ENCODE measurements at regions of chr10 and their contacts with region 1.

Region 1: DNA sequence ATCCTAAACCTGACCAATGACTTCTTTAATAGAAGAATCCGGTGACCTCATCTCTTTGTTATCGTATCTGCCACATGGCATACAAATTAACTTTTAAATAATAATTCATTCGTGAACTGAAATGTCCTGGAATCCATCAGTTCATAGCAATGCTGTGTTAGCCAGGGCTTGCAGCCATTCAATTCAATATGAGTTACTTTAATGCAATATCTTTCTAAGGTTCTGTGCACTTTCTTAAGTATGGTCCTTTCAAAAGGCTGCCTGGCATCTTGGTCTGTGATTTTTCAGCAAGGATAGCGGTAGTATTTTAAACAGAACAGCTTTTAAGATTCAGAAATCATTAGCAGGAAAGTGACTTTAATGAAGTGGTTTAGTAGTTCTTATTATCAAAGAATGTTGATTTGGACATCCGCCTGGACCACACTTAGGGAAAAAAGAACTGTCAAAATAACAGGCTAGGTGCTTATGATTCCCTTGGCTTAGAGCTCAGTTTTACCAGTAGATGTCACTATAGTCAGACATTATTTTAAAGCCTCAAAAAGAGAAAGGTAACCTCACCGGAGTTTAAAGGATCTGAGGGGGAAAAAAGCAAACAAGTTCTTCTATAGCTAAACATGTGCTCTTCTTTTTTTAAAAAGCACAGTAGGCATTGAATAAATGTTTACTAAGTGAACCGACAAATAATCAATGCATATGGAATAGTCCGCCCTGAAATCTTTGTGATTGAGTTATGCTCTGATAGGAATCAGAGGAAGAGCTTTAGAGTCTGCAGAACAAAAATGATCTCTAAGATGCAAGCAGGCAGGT is 22.7 kb downstream of the SLC35G1 start:
- ATAC-seq: peak in 7 of 8 experiments; percentile 40 to 75 (median 55)
- H3K4me3 ChIP-seq: no peak overlapping the region
- H3K27ac ChIP-seq: no peak overlapping the region
- H3K4me1 ChIP-seq: no peaks in the 10 kb centered on the region

Region 2: GRCh38 chr10:93591065-93591808 is 325.2 kb before region 1 on chr10:
- in situ Hi-C with region 1: no loop called
- ATAC-seq: peak in 1 of 8 experiments; percentile 28
- H3K4me3 ChIP-seq: no peak overlapping the region
- H3K27ac ChIP-seq: no peak overlapping the region
- H3K4me1 ChIP-seq: no peaks in the 10 kb centered on the region

Region 3: GRCh38 chr10:93867525-93867924 is 48.9 kb before region 1 on chr10:
- in situ Hi-C with region 1: no loop called
- ATAC-seq: no peak
- H3K4me3 ChIP-seq: no peak overlapping the region
- H3K27ac ChIP-seq: no peak overlapping the region
- H3K4me1 ChIP-seq: no peaks in the 10 kb centered on the region

Region 4: GRCh38 chr10:94320285-94320914 is 403.9 kb after region 1 on chr10:
- in situ Hi-C with region 1: loop called in 3 of 9 experiments (anchors 10 to 25 kb)
- ATAC-seq: peak in 3 of 8 experiments; percentile 31 to 63 (median 62)
- H3K4me3 ChIP-seq: no peak overlapping the region
- H3K27ac ChIP-seq: no peak overlapping the region
- H3K4me1 ChIP-seq: no peaks in the 10 kb centered on the region

Region 5: DNA sequence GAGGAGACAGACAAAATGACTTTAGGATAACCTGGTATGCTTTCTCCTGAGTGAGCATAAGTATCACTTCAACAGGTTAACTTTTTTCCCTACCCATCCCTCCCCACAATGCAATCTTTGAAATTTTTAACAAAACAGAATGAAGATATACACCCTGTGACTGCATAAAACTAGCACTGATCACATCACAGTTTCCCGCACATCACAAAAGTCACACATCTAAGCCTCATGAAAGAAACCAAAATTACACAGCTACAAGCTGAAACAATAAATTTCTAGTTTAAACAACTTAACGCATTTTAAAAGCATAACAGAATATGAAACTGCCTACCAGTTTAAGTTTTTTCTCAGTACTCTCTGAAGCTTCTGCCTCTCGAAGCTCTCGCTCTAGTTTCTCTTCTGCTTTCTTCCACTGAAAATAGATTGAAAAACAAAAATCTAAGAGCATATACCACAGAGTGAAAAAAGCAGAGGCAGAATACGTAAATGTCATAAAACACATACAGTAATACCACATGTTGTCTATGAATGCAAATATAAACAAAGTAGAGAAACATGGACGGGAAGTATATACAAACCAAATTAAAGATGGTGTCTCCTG is 428.2 kb after region 1 on chr10:
- in situ Hi-C with region 1: loop called in 1 of 9 experiments (anchors 25 kb)
- ATAC-seq: no peak
- H3K4me3 ChIP-seq: no peak overlapping the region
- H3K27ac ChIP-seq: no peak overlapping the region
- H3K4me1 ChIP-seq: no peaks in the 10 kb centered on the region